ENCODE measurements at regions of chr4 and their contacts with region 1.

Region 1: DNA sequence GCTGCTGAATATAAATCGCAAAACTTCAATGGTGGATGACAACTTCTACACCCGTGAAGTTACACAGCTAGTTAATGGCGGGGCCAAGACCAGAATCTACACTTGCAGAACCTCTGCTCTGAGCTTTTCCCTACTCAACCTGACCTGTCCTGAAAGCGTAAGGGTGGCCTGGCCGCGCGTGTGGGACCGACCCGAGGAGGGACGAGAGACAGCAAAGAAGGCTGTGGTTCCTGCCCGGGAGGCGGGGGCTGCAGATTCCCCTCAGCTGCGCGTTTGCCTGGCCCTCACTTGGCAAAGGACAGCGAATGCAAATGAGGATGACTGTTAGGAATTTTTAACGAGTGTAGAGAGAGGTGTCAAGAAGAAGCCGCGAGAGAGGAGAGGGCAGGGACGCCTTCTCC is 495 bp downstream of the GNPDA2 start:
- DNase-seq: peak; percentile 75

Region 2: GRCh38 chr4:44532851-44533250 is 193.0 kb before region 1 on chr4:
- intact Hi-C with region 1: no loop called
- DNase-seq: no peak

Region 3: DNA sequence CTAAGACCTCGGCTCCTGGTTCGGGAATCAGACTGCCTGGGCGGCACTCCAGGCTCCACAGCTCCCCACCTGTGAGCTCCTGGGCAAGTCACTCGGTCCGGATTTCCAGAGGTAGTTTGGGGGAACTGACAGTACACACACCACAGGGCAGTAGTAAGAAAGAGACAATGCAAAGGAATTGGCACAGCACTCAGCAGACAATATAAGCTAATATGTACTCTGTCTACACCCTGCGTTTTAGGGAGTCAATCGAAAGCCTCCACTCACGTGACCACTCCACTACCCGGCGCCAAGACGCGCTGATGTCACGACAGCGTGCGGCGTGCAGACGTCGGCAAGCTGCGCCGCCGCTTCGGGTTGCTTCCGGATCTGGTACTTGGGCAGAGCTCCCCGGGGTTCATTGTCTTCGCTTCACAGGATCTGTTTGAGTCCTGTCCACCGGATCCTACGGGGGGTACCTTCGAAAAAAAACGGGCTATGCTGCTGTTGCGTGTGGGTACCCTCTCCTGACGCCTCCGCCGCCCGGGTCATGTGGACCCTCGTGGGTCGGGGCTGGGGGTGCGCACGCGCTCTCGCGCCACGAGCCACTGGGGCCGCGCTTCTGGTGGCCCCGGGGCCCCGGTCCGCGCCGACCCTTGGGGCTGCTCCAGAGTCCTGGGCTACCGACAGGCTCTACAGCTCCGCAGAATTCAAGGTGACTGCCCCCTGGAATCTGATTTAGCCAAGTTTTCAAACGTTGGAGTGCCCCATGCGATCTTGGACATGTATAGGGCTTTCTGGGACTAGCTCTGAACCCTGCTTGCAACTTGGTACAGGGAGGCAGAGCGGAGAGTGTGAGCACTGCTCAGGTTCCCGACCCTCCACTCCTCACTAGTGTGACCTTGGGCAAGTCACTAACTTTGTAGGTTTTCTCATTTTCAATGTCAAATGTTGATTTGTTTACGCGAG is 47.5 kb before region 1 on chr4 and contains the start of gene GUF1:
- intact Hi-C with region 1: loop called (anchors 1 kb)
- DNase-seq: peak; percentile 94
- total RNA-seq, gene GUF1: 22.8 TPM

Measured in cardiac septum (tissue), 1 donor.